ENCODE measurements at regions of chr1 and their contacts with region 1.

Region 1: GRCh38 chr1:13748610-13749505 is 48.9 kb downstream of the PRDM2 start:
- DNase-seq: peak; percentile 93
- ATAC-seq: peak; percentile 89
- H3K4me3 ChIP-seq: peak overlapping the region; percentile 92
- H3K27ac ChIP-seq: peak overlapping the region; percentile 58
- H3K4me1 ChIP-seq: peaks cover 3% of the 10 kb centered on the region
- H3K27me3 ChIP-seq: no peaks in the 10 kb centered on the region
- CTCF ChIP-seq: peak; percentile 36
- POLR2A ChIP-seq: peak; percentile 85
- RAD21 ChIP-seq: no peak

Region 2: DNA sequence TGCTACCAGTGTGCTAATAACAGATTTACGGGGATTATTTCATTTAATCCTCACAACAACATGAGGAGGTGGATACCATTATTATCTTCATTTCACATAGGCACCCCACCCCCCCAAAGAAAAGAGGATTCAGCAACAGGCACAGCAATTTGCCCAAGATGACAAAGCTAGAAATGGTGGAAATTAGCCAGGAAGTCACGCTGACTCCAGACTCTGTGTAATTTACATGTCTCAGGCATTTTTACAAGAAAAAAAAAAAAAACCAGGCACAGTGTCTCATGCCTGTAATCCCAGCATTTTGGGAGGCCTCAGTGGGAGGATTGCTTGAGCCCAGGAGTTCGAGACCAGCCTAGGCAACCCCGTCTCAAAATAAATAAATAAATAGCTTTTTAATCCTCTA is 86.4 kb before region 1 on chr1:
- CTCF ChIA-PET with region 1: interaction called, 4 read pairs
- POLR2A ChIA-PET with region 1: no interaction called
- dilution Hi-C with region 1: no loop called
- in situ Hi-C with region 1: no loop called
- intact Hi-C with region 1: loop called (anchors 2 kb)
- DNase-seq: no peak
- ATAC-seq: no peak
- H3K4me3 ChIP-seq: no peak overlapping the region
- H3K27ac ChIP-seq: no peak overlapping the region
- H3K4me1 ChIP-seq: no peaks in the 10 kb centered on the region
- H3K27me3 ChIP-seq: no peaks in the 10 kb centered on the region
- CTCF ChIP-seq: no peak
- POLR2A ChIP-seq: no peak
- RAD21 ChIP-seq: no peak

Region 3: DNA sequence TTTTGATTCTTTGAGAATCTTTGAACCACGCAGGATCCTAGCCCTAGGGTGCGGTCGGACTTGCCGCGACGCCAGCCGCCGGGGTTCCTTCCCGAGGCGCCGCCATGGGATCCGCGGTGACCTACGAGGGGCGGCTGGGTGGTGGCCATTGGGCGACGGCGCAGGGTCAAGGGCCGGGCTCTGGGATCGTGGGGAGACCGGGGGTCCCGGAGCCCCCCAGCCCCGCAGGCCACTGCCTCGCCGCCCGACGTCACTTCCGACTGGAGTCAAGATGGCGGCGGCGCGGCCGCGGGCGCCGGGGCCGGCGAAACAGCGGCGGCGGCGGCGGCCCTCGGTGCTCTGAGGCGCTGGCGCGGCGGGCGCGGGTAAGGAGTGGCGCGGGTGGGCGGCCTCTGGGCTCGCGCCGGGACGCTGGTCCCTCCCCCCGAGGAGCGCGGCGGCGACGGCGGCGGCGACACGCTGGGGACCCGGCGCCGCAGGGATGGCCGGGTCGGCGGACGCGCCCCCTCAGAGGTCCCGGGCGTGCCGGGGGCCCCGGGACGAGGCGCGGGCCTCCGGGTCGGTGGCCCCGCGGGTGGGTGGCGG is 48.8 kb before region 1 on chr1 and contains the start of gene PRDM2:
- CTCF ChIA-PET with region 1: no interaction called
- POLR2A ChIA-PET with region 1: no interaction called
- dilution Hi-C with region 1: no loop called
- in situ Hi-C with region 1: no loop called
- intact Hi-C with region 1: loop called (anchors 2 kb)
- DNase-seq: peak; percentile 17
- ATAC-seq: peak; percentile 90
- H3K4me3 ChIP-seq: peak within 1 kb of the TSS; percentile 96
- H3K27ac ChIP-seq: peak within 1 kb of the TSS; percentile 75
- H3K4me1 ChIP-seq: peaks cover 4% of the 10 kb centered on the region
- H3K27me3 ChIP-seq: no peaks in the 10 kb centered on the region
- CTCF ChIP-seq: no peak
- POLR2A ChIP-seq: no peak; the same call in 1 of the 2 replicates
- RAD21 ChIP-seq: no peak
- total RNA-seq, gene PRDM2: 3.4 and 4.7 TPM in 2 replicates

Region 4: GRCh38 chr1:13722808-13723360 is 26.0 kb before region 1 on chr1:
- CTCF ChIA-PET with region 1: no interaction called
- POLR2A ChIA-PET with region 1: no interaction called
- dilution Hi-C with region 1: no loop called
- in situ Hi-C with region 1: no loop called
- intact Hi-C with region 1: no loop called
- DNase-seq: no peak
- ATAC-seq: peak; percentile 49
- H3K4me3 ChIP-seq: no peak overlapping the region
- H3K27ac ChIP-seq: no peak overlapping the region
- H3K4me1 ChIP-seq: no peaks in the 10 kb centered on the region; the same call in 1 of the 2 replicates
- H3K27me3 ChIP-seq: no peaks in the 10 kb centered on the region
- CTCF ChIP-seq: no peak
- POLR2A ChIP-seq: no peak
- RAD21 ChIP-seq: no peak

Region 5: DNA sequence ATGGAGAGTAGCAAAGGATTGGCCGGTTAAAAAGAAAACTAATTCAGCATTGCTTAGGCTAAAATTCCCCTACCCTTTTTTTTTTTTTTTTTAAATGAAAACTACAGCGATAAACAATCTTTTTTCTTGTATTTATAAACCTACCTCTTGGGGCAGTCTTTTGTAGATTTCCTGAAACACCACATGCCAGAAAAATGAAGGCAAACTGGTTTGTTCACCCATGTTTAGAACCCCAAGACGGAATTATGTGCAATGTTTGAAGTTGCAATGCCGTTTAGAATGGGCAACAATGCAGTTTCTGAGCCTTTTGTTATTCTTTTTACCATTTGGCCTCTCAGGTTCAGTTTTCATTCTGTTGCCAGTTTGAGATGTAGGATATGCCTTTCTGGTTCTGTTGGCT is 10.2 kb after region 1 on chr1:
- CTCF ChIA-PET with region 1: interaction called, 3 read pairs
- POLR2A ChIA-PET with region 1: no interaction called
- dilution Hi-C with region 1: no loop called
- in situ Hi-C with region 1: no loop called
- intact Hi-C with region 1: loop called (anchors 1 kb)
- DNase-seq: no peak
- ATAC-seq: no peak
- H3K4me3 ChIP-seq: no peak overlapping the region
- H3K27ac ChIP-seq: no peak overlapping the region
- H3K4me1 ChIP-seq: peaks cover 12% of the 10 kb centered on the region
- H3K27me3 ChIP-seq: no peaks in the 10 kb centered on the region
- CTCF ChIP-seq: no peak; the same call in 1 of the 2 replicates
- POLR2A ChIP-seq: no peak
- RAD21 ChIP-seq: no peak

Region 6: GRCh38 chr1:13770743-13771142 is 21.9 kb after region 1 on chr1:
- CTCF ChIA-PET with region 1: no interaction called
- POLR2A ChIA-PET with region 1: no interaction called
- dilution Hi-C with region 1: no loop called
- in situ Hi-C with region 1: no loop called
- intact Hi-C with region 1: no loop called
- DNase-seq: no peak
- ATAC-seq: no peak
- H3K4me3 ChIP-seq: no peak overlapping the region
- H3K27ac ChIP-seq: no peak overlapping the region
- H3K4me1 ChIP-seq: peaks cover 11% of the 10 kb centered on the region
- H3K27me3 ChIP-seq: no peaks in the 10 kb centered on the region
- CTCF ChIP-seq: no peak
- POLR2A ChIP-seq: no peak
- RAD21 ChIP-seq: no peak

Region 7: GRCh38 chr1:13788783-13789182 is 39.9 kb after region 1 on chr1:
- CTCF ChIA-PET with region 1: interaction called, 3 read pairs
- POLR2A ChIA-PET with region 1: no interaction called
- dilution Hi-C with region 1: no loop called
- in situ Hi-C with region 1: no loop called
- intact Hi-C with region 1: loop called (anchors 5 kb)
- DNase-seq: no peak
- ATAC-seq: no peak
- H3K4me3 ChIP-seq: no peak overlapping the region
- H3K27ac ChIP-seq: no peak overlapping the region
- H3K4me1 ChIP-seq: peaks cover 9% of the 10 kb centered on the region
- H3K27me3 ChIP-seq: no peaks in the 10 kb centered on the region
- CTCF ChIP-seq: no peak
- POLR2A ChIP-seq: no peak
- RAD21 ChIP-seq: no peak

Region 8: GRCh38 chr1:13807213-13807612 is 58.4 kb after region 1 on chr1:
- CTCF ChIA-PET with region 1: no interaction called
- POLR2A ChIA-PET with region 1: no interaction called
- dilution Hi-C with region 1: no loop called
- in situ Hi-C with region 1: no loop called
- intact Hi-C with region 1: loop called (anchors 2 kb)
- DNase-seq: no peak
- ATAC-seq: peak; percentile 37; the same call in 1 of the 2 replicates
- H3K4me3 ChIP-seq: no peak overlapping the region
- H3K27ac ChIP-seq: no peak overlapping the region
- H3K4me1 ChIP-seq: no peaks in the 10 kb centered on the region
- H3K27me3 ChIP-seq: no peaks in the 10 kb centered on the region
- CTCF ChIP-seq: peak; percentile 41
- POLR2A ChIP-seq: no peak
- RAD21 ChIP-seq: peak; percentile 38

Region 9: DNA sequence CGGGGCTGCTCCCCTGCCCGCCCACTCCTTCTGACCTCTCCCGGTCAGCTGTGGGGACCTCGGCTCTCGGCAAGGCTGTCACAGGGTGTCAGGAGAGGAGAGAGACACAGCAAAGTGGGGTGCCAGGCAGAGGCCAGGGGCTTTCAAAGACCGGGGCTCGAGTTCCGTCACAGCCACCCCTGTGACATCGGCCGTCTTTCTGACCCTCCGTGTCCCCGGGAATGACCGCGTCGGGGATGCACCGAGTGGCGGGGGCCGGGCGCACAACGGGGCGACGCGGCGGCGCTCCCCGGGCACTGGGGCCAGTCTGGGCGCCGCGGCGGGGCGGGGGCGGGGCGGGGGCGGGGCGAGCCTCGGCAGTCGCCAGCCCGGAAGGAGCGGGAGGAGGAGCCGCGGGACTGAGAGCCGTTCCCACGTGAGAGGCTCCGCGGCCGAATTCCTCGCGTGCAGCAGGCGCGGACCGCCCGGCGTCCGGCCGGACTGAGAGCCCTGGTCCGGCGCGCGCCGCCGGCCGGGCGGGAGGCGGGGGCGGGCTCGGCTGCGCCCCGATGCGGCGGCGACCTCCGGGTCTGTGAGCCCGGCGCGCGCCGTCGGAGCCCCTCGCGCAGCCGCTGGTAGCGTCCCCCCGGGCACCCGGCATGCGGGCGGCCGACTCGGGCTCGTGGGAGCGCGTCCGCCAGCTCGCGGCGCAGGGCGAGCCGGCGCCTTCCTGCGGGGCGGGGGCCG is 1175.0 kb after region 1 on chr1:
- CTCF ChIA-PET with region 1: no interaction called
- POLR2A ChIA-PET with region 1: no interaction called
- dilution Hi-C with region 1: no loop called
- in situ Hi-C with region 1: loop called (anchors 25 kb)
- intact Hi-C with region 1: no loop called
- DNase-seq: peak; percentile 71
- ATAC-seq: peak; percentile 73
- H3K4me3 ChIP-seq: peak overlapping the region; percentile 79
- H3K27ac ChIP-seq: peak overlapping the region; percentile 40; the same call in 1 of the 2 replicates
- H3K4me1 ChIP-seq: peaks cover 20% of the 10 kb centered on the region
- H3K27me3 ChIP-seq: no peaks in the 10 kb centered on the region; the same call in 1 of the 2 replicates
- CTCF ChIP-seq: no peak
- POLR2A ChIP-seq: no peak
- RAD21 ChIP-seq: no peak